ENCODE measurements at regions of chr13 and their contacts with region 1.

Region 1: GRCh38 chr13:97849305-97849704 is 104.2 kb upstream of the IPO5 start:
- DNase-seq: peak; percentile 75
- ATAC-seq: peak; percentile 77
- H3K4me3 ChIP-seq: no peak overlapping the region
- H3K27ac ChIP-seq: no peak overlapping the region
- H3K4me1 ChIP-seq: peaks cover 14% of the 10 kb centered on the region
- H3K27me3 ChIP-seq: no peaks in the 10 kb centered on the region
- CTCF ChIP-seq: peak; percentile 70

Region 2: GRCh38 chr13:97588993-97589392 is 260.3 kb before region 1 on chr13:
- CTCF ChIA-PET with region 1: no interaction called
- POLR2A ChIA-PET with region 1: no interaction called
- intact Hi-C with region 1: no loop called
- DNase-seq: no peak
- ATAC-seq: no peak
- H3K4me3 ChIP-seq: no peak overlapping the region
- H3K27ac ChIP-seq: no peak overlapping the region
- H3K4me1 ChIP-seq: no peaks in the 10 kb centered on the region
- H3K27me3 ChIP-seq: 0 out of 2 replicates have a peak, but pooled peaks cover 5% of the 10 kb centered on the region
- CTCF ChIP-seq: no peak

Region 3: GRCh38 chr13:97715763-97716162 is 133.5 kb before region 1 on chr13:
- CTCF ChIA-PET with region 1: no interaction called
- POLR2A ChIA-PET with region 1: no interaction called
- intact Hi-C with region 1: no loop called
- DNase-seq: peak; percentile 18
- ATAC-seq: no peak
- H3K4me3 ChIP-seq: no peak overlapping the region
- H3K27ac ChIP-seq: no peak overlapping the region
- H3K4me1 ChIP-seq: no peaks in the 10 kb centered on the region
- H3K27me3 ChIP-seq: no peaks in the 10 kb centered on the region
- CTCF ChIP-seq: no peak

Region 4: GRCh38 chr13:98103942-98104880 is 254.9 kb after region 1 on chr13:
- CTCF ChIA-PET with region 1: no interaction called
- POLR2A ChIA-PET with region 1: no interaction called
- intact Hi-C with region 1: loop called (anchors 1 kb)
- DNase-seq: peak; percentile 17
- ATAC-seq: 0 out of 2 replicates have a peak, but pooled peaks have one; percentile 31
- H3K4me3 ChIP-seq: no peak overlapping the region
- H3K27ac ChIP-seq: no peak overlapping the region
- H3K4me1 ChIP-seq: no peaks in the 10 kb centered on the region
- H3K27me3 ChIP-seq: no peaks in the 10 kb centered on the region
- CTCF ChIP-seq: peak; percentile 50

Region 5: DNA sequence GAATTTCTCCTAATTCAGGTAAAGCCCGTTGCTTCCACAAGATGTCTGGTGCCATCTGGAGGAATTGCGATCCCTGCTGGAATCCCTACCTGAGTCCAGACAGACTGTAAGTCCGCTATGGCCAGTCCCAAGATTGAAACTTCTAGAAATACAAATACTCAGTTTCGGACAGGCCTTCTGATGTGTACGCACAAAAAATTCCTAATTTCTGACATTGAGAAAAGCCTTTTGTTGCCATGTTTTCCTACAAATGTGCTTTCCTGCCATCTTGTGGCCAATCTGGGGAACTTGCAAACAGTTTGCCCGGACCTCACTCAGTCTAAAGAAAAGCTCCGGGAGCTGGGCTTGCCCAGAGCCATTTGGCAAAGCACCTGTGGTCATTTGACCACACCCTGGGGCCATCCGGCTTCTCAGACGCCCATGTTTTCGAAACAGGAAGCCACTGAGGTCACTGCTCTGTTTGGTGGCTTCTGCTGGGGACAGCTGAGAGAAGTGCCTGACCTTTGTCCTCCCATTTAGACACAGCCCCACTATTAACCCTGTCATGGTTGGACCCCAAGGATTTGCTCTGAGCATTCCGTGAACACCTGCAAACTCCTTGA is 823.7 kb after region 1 on chr13:
- CTCF ChIA-PET with region 1: no interaction called
- POLR2A ChIA-PET with region 1: no interaction called
- intact Hi-C with region 1: loop called (anchors 2 kb)
- DNase-seq: peak; percentile 79
- ATAC-seq: peak; percentile 94
- H3K4me3 ChIP-seq: peak overlapping the region; percentile 57; the same call in 1 of the 2 replicates
- H3K27ac ChIP-seq: 0 out of 2 replicates have a peak overlapping the region, but pooled peaks have one; percentile 8
- H3K4me1 ChIP-seq: peaks cover 11% of the 10 kb centered on the region
- H3K27me3 ChIP-seq: no peaks in the 10 kb centered on the region
- CTCF ChIP-seq: peak; percentile 91